ENCODE measurements at regions of chr11 and their contacts with region 1.

Region 1: DNA sequence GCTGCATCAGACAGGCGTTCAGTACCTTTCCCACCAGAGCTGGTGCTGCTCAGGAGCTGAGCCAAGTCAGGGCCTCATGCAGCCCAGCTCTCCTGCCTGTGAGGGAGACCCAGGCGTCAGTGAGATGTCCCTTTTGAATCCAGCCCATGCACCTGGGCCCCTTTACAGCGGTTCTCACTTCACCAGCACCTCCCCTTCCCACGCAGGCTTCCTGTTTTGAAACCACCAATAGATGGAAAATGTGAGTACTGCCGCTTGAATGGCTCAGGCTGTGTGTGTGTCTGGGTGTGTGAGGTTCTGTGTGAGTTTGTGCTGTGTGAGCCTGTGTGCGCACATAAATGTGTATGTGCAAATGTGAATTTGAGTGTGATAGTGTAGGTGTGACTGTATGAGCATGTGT is 88.4 kb downstream of the UBASH3B start:
- DNase-seq: peak; percentile 54 to 91 (median 65)
- ATAC-seq: peak; percentile 64 to 83
- H3K4me3 Mint-ChIP-seq: no peak overlapping the region
- H3K27ac Mint-ChIP-seq: no peak overlapping the region
- H3K4me1 Mint-ChIP-seq: peaks cover 11 to 44% (median 27%) of the 10 kb centered on the region in 4 donors
- H3K27me3 Mint-ChIP-seq: no peaks in the 10 kb centered on the region

Region 2: GRCh38 chr11:122655527-122656072 is 88.3 kb before region 1 on chr11 and contains the start of gene UBASH3B:
- POLR2A ChIA-PET with region 1: interaction called, 28 read pairs
- DNase-seq: peak; percentile 29 to 69 (median 48)
- ATAC-seq: peak; percentile 72 to 79
- H3K4me3 Mint-ChIP-seq: peak within 1 kb of the TSS; percentile 92 to 100 (median 98)
- H3K27ac Mint-ChIP-seq: peak within 1 kb of the TSS; percentile 85 to 97 (median 96)
- H3K4me1 Mint-ChIP-seq: peaks cover 27 to 54% (median 45%) of the 10 kb centered on the region in 4 donors
- H3K27me3 Mint-ChIP-seq: no peaks in the 10 kb centered on the region
- polyA plus RNA-seq, gene UBASH3B: 6.8 to 12.8 (median 7.1) TPM

Region 3: GRCh38 chr11:122668562-122669090 is 75.3 kb before region 1 on chr11:
- POLR2A ChIA-PET with region 1: interaction called, 27 read pairs
- DNase-seq: peak in 4 of 10 donors; percentile 28 to 59 (median 44)
- ATAC-seq: peak; percentile 52 to 80
- H3K4me3 Mint-ChIP-seq: peak overlapping the region in 9 of 10 donors; percentile 19 to 77 (median 56)
- H3K27ac Mint-ChIP-seq: peak overlapping the region; percentile 79 to 95 (median 91)
- H3K4me1 Mint-ChIP-seq: peaks cover 46 to 95% (median 84%) of the 10 kb centered on the region in 4 donors
- H3K27me3 Mint-ChIP-seq: no peaks in the 10 kb centered on the region

Region 4: GRCh38 chr11:122690801-122691548 is 53.0 kb before region 1 on chr11:
- POLR2A ChIA-PET with region 1: interaction called, 144 read pairs
- DNase-seq: peak in 3 of 10 donors; percentile 30 to 37 (median 31)
- ATAC-seq: peak; percentile 61 to 68
- H3K4me3 Mint-ChIP-seq: peak overlapping the region; percentile 37 to 83 (median 80)
- H3K27ac Mint-ChIP-seq: peak overlapping the region; percentile 87 to 96 (median 93)
- H3K4me1 Mint-ChIP-seq: peaks cover 47 to 86% (median 80%) of the 10 kb centered on the region in 4 donors
- H3K27me3 Mint-ChIP-seq: no peaks in the 10 kb centered on the region

Region 5: GRCh38 chr11:122733318-122733717 is 10.6 kb before region 1 on chr11:
- POLR2A ChIA-PET with region 1: interaction called, 54 read pairs
- DNase-seq: no peak
- ATAC-seq: no peak
- H3K4me3 Mint-ChIP-seq: peak overlapping the region in 2 of 10 donors; percentile 12 to 48
- H3K27ac Mint-ChIP-seq: peak overlapping the region in 4 of 10 donors; percentile 31 to 66 (median 54)
- H3K4me1 Mint-ChIP-seq: peaks cover 28 to 49% (median 30%) of the 10 kb centered on the region in 4 donors
- H3K27me3 Mint-ChIP-seq: no peaks in the 10 kb centered on the region